AG04450 (cell line): ENCODE measurements at regions of chr12 and their contacts with region 1.

Region 1: GRCh38 chr12:95336390-95337067 is 118.9 kb downstream of the VEZT start:
- DNase-seq: peak; percentile 70
- H3K4me3 ChIP-seq: peak overlapping the region; percentile 14; the same call in 1 of the 2 replicates
- H3K27ac ChIP-seq: peak overlapping the region; percentile 53
- H3K27me3 ChIP-seq: no peaks in the 10 kb centered on the region
- CTCF ChIP-seq: peak; percentile 79

Region 2: DNA sequence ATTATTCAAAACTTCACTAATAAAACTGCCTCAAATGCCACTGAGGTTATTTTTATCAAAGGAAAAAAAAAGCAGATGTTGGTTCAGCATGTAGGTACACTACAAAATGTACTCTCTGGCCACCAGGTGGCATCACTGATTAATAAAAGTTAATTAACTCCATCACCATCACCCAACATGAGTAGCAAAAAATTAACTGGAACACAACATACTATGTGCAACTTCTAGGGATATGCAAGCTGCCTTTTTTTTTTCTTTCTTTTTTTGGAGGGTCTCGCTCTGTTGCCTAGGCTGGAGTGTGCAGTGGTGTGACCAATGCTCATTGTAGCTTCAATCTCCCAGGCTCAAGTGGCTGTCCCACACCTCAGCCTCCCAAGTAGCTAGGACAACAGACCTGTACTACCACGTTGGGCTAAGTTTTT is 219.3 kb before region 1 on chr12:
- CTCF ChIA-PET with region 1: interaction called, 29 read pairs
- POLR2A ChIA-PET with region 1: interaction called, 3 read pairs
- DNase-seq: peak; percentile 47
- H3K4me3 ChIP-seq: no peak overlapping the region
- H3K27ac ChIP-seq: no peak overlapping the region
- H3K27me3 ChIP-seq: no peaks in the 10 kb centered on the region
- CTCF ChIP-seq: peak; percentile 60

Region 3: GRCh38 chr12:95304673-95305198 is 31.8 kb before region 1 on chr12:
- CTCF ChIA-PET with region 1: no interaction called
- POLR2A ChIA-PET with region 1: no interaction called
- DNase-seq: no peak
- H3K4me3 ChIP-seq: no peak overlapping the region
- H3K27ac ChIP-seq: no peak overlapping the region
- H3K27me3 ChIP-seq: no peaks in the 10 kb centered on the region
- CTCF ChIP-seq: no peak